ENCODE measurements at regions of chr13 and their contacts with region 1.

Region 1: GRCh38 chr13:33723772-33724435 is 94.0 kb upstream of the RFC3 start:
- DNase-seq: peak; percentile 74
- ATAC-seq: peak; percentile 73
- H3K4me3 ChIP-seq: no peak overlapping the region
- H3K4me3 Mint-ChIP-seq: no peak overlapping the region
- H3K27ac ChIP-seq: no peak overlapping the region
- H3K27ac Mint-ChIP-seq: no peak overlapping the region
- H3K4me1 ChIP-seq: peaks cover 14 to 16% of the 10 kb centered on the region in 2 donors
- H3K4me1 Mint-ChIP-seq: peaks cover 18% of the 10 kb centered on the region
- H3K27me3 ChIP-seq: peaks cover 0 to 24% (median 16%) of the 10 kb centered on the region in 4 experiments
- H3K27me3 Mint-ChIP-seq: peaks cover 22% of the 10 kb centered on the region
- CTCF ChIP-seq: peak; percentile 70

Region 2: GRCh38 chr13:33228648-33229445 is 495.1 kb before region 1 on chr13:
- CTCF ChIA-PET with region 1: interaction called, 52 read pairs
- POLR2A ChIA-PET with region 1: no interaction called
- intact Hi-C with region 1: loop called (anchors 1 kb)
- DNase-seq: peak; percentile 62
- ATAC-seq: peak; percentile 66
- H3K4me3 ChIP-seq: no peak overlapping the region
- H3K4me3 Mint-ChIP-seq: no peak overlapping the region
- H3K27ac ChIP-seq: no peak overlapping the region
- H3K27ac Mint-ChIP-seq: no peak overlapping the region
- H3K4me1 ChIP-seq: no peaks in the 10 kb centered on the region
- H3K4me1 Mint-ChIP-seq: peaks cover 3% of the 10 kb centered on the region
- H3K27me3 ChIP-seq: no peaks in the 10 kb centered on the region
- H3K27me3 Mint-ChIP-seq: peaks cover 4% of the 10 kb centered on the region
- CTCF ChIP-seq: peak; percentile 97

Region 3: DNA sequence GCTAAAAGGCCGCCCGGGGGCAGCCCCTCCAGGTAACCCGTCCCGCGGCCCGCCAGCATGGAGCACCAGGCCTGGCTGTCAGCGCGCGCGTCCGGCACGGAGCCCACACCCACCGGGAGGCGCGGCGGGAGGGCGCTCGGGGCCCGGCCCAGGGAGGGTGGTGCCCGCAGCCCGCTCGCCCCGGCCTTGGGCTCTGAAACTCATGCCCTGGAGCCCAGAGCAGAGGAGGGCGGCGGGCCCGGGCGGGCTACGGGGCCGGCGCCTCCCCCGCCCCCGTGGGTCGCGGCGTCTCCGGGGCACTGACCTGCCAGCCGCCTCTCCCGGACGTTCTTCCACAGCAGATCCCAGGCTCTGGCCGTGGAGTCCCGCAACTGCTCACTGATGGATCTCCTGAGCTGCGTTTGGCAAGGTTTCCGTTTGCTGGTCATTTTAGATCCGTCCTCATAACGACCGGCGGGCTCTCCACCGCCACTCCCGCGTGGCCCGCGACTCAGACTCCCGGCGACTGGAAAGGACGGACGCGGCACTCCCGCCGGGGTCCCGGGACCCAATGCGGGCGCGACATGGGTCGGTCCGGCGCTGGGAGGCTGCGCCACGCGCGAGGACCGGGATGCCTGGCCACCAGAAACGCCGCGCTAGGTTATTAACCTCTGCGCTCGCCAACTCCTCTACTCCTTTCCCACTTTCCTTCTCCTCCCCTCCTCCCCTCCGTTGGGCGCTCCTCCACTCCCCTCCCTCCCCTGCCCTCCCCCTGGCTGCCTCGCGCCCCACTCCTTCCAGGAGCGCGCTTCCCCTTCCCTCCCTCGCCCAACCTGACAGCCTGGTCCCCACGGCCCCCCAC is 373.7 kb before region 1 on chr13:
- CTCF ChIA-PET with region 1: no interaction called
- POLR2A ChIA-PET with region 1: no interaction called
- intact Hi-C with region 1: loop called (anchors 10 kb)
- DNase-seq: peak; percentile 32
- ATAC-seq: peak; percentile 45
- H3K4me3 ChIP-seq: peak overlapping the region in 3 of 5 experiments; percentile 46 to 62 (median 54)
- H3K4me3 Mint-ChIP-seq: peak overlapping the region; percentile 74
- H3K27ac ChIP-seq: no peak overlapping the region
- H3K27ac Mint-ChIP-seq: no peak overlapping the region
- H3K4me1 ChIP-seq: peaks cover 29 to 37% of the 10 kb centered on the region in 2 donors
- H3K4me1 Mint-ChIP-seq: peaks cover 36% of the 10 kb centered on the region
- H3K27me3 ChIP-seq: peaks cover 0 to 19% (median 9%) of the 10 kb centered on the region in 4 experiments
- H3K27me3 Mint-ChIP-seq: peaks cover 41% of the 10 kb centered on the region
- CTCF ChIP-seq: no peak